ENCODE measurements at regions of chr3 and their contacts with region 1.

Region 1: GRCh38 chr3:99970198-99970597 is 144.1 kb downstream of the FILIP1L start:
- DNase-seq: no peak
- H3K4me3 ChIP-seq: no peak overlapping the region
- H3K27ac ChIP-seq: no peak overlapping the region
- H3K4me1 ChIP-seq: peaks cover 3% of the 10 kb centered on the region
- H3K27me3 ChIP-seq: no peaks in the 10 kb centered on the region
- CTCF ChIP-seq: no peak
- EP300 ChIP-seq: no peak
- POLR2A ChIP-seq: no peak

Region 2: DNA sequence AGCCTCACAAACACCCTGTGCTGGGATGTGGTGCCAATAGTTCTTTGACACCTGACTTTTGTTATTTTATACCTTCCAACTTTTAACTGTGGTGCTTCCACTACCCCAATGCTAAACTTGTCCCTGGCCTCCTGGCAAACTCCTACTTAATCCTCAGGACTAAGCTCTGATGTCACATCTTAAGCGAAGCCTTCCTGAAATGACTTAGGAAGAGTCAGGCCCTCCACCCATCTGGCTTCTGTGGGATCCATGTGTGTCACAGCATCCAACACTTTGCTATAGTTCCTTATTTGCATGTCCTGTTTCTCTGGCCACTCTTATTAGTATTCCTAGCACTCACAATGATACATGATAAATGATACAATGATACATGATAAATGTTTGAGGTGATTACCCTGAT is 10.9 kb after region 1 on chr3:
- intact Hi-C with region 1: no loop called
- DNase-seq: no peak
- H3K4me3 ChIP-seq: no peak overlapping the region
- H3K27ac ChIP-seq: no peak overlapping the region
- H3K4me1 ChIP-seq: peaks cover 1% of the 10 kb centered on the region
- H3K27me3 ChIP-seq: no peaks in the 10 kb centered on the region
- CTCF ChIP-seq: no peak
- EP300 ChIP-seq: no peak
- POLR2A ChIP-seq: no peak

Region 3: GRCh38 chr3:100234364-100234763 is 264.2 kb after region 1 on chr3:
- intact Hi-C with region 1: no loop called
- DNase-seq: no peak
- H3K4me3 ChIP-seq: no peak overlapping the region
- H3K27ac ChIP-seq: no peak overlapping the region
- H3K4me1 ChIP-seq: no peaks in the 10 kb centered on the region
- H3K27me3 ChIP-seq: no peaks in the 10 kb centered on the region
- CTCF ChIP-seq: no peak
- EP300 ChIP-seq: no peak
- POLR2A ChIP-seq: no peak

Region 4: GRCh38 chr3:101544161-101544850 is 1574.1 kb after region 1 on chr3:
- intact Hi-C with region 1: loop called in 1 of 4 experiments (anchors 10 kb)
- DNase-seq: no peak
- H3K4me3 ChIP-seq: no peak overlapping the region
- H3K27ac ChIP-seq: no peak overlapping the region
- H3K4me1 ChIP-seq: no peaks in the 10 kb centered on the region
- H3K27me3 ChIP-seq: no peaks in the 10 kb centered on the region
- CTCF ChIP-seq: no peak
- EP300 ChIP-seq: no peak
- POLR2A ChIP-seq: no peak